GM10248 (cell line): ENCODE measurements at regions of chr20 and their contacts with region 1.

Region 1: DNA sequence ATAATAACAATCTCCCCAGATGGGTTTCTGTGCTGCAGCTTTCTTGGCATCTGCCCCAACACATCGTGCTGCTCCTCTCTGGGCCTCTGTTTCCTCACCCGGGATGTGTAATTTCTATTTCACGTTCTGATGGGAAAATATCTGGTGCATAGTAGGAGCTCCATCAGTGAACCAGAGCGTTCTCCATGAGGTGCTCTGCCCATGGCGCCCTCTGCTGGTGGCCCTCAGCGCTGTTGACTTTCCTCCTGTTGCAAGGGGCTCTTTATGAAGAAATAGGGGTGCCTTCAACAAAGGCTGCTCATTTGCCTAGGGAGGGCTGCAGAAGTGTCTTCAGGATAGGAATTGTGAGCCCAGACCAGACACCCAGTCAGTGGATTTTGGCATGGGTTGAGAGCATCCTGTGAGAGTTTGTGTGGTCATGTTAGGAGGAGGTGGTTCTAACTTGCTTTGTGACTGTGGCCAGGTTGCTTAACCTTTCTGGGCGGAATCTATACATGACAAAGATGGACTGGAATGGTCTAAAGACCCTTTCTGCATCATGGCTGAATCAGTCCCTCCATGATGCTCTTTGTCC is 8.1 kb downstream of the SCRT2 start:
- DNase-seq: peak; percentile 70
- CTCF ChIP-seq: peak; percentile 83

Region 2: DNA sequence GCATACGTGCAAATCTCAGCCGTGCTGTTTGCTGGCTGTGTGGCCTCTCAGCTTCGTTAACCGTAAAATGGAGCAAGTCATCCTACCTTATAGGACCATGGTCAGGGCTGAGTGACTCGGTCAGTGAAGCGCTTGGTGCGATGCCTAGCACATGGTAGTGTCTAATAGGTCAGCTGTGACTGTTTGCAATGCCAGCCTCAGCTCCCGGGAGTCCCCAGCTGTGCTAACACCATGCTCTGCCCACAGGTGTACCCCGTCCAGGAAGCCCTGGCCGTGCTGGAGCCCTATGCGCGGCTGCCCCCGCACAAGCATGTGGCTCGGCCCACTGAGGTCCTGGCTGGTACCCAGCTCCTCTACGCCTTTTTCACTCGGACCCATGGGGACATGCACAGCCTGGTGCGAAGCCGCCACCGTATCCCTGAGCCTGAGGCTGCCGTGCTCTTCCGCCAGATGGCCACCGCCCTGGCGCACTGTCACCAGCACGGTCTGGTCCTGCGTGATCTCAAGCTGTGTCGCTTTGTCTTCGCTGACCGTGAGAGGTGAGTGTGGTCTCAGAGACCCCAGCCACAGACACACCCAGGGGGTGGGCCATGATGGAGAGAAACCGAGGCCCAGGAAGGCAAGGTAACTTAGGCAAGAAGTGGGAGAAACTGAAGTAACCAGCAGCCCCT is 276.3 kb before region 1 on chr20:
- CTCF ChIA-PET with region 1: no interaction called
- POLR2A ChIA-PET with region 1: no interaction called
- DNase-seq: no peak
- CTCF ChIP-seq: no peak

Region 3: GRCh38 chr20:483813-484644 is 183.4 kb before region 1 on chr20:
- CTCF ChIA-PET with region 1: no interaction called
- POLR2A ChIA-PET with region 1: no interaction called
- DNase-seq: no peak
- CTCF ChIP-seq: no peak

Region 4: GRCh38 chr20:653590-654416 is 13.7 kb before region 1 on chr20:
- CTCF ChIA-PET with region 1: interaction called, 69 read pairs
- POLR2A ChIA-PET with region 1: interaction called, 4 read pairs
- DNase-seq: no peak
- CTCF ChIP-seq: no peak

Region 5: GRCh38 chr20:682123-682522 is 14.6 kb after region 1 on chr20:
- CTCF ChIA-PET with region 1: interaction called, 23 read pairs
- POLR2A ChIA-PET with region 1: no interaction called
- DNase-seq: no peak
- CTCF ChIP-seq: no peak

Region 6: DNA sequence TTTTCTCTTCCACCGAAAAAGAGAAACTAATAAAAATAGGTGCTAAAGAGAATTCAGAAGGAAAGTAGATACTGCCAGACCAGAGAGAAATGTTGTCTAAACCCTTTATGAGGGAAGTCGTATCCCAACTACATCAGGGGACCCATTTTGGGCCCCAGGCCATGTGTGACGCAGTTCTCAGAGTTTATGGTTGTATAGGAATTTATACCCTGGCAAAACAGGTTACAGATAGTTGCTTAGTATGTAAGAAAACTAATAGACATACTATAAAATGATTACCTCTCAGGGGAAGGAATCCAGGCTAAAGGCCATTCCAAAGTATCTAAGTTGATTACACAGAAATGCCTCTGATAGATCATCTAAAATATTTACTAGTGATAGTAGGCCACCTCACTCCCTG is 129.4 kb after region 1 on chr20:
- CTCF ChIA-PET with region 1: no interaction called
- POLR2A ChIA-PET with region 1: no interaction called
- DNase-seq: no peak
- CTCF ChIP-seq: no peak